Psoas muscle (tissue), 8 donors: ENCODE measurements at regions of chr1 and their contacts with region 1.

Region 1: DNA sequence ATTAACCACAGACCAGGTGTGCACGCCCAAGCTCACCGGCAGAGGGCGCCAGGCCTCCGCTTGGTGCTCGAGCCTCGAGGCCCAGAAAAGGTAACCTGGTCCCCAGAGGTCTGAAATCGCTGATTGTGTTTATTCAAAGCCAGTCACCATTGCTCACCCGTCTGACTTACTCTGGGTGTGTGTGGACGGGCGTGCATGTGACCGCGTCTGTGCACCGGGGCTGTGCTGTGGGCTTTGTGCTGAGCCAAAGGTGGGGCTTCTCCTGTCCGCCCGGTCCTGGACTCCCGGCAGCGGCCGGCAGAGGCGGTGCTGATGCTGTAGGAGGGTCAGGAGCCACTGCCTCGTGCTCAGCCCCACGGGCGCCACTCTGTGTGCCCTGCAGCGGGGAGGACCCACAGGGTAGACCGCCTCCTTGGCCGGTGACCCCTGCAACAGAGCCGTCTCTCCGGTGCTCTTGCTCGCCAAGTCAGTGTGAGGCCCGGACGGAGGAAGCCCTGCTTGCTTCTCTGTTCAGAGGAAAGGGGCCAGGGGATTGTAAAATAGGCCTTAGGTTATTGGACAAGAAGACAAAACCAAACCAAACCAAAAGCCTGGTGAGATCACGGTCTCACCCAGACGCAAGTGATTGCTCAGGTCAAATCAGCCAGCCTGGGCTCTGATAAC is 32.0 kb upstream of the BTG2 start:
- DNase-seq: peak; percentile 86 to 94
- ATAC-seq: peak; percentile 58 to 66 (median 61)
- H3K4me3 ChIP-seq: peak overlapping the region; percentile 59
- H3K27ac ChIP-seq: peak overlapping the region; percentile 91
- H3K4me1 ChIP-seq: peaks cover 83% of the 10 kb centered on the region
- H3K27me3 ChIP-seq: no peaks in the 10 kb centered on the region
- CTCF ChIP-seq: peak; percentile 96

Region 2: DNA sequence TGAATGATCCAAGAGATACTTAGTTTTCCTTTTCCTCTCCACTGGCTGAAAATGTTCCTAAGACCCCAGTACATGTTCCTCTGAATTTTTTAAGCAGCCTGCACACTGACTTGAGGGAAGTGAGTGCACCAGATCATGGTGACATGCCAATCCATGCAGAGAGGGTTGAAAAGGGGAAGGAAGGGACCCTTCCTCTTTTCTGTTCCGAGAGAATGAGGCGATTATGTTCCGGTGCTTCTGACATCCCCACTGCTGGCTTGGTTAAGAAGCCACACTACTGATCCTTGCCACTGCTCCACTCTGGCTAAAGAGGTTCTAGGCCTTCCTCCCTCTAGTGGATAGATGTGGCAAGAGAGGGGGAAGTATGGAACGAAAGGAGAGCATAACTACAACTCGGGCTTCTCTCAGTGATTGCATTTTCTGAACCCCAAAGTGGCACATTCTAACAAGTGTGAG is 304.5 kb before region 1 on chr1:
- intact Hi-C with region 1: loop called in 1 of 2 experiments (anchors 5 kb)
- DNase-seq: peak in 1 of 2 donors; percentile 26
- ATAC-seq: peak in 2 of 4 donors; percentile 20 to 23
- H3K4me3 ChIP-seq: no peak overlapping the region
- H3K27ac ChIP-seq: peak overlapping the region; percentile 99
- H3K4me1 ChIP-seq: peaks cover 10% of the 10 kb centered on the region
- H3K27me3 ChIP-seq: no peaks in the 10 kb centered on the region
- CTCF ChIP-seq: peak; percentile 58

Region 3: DNA sequence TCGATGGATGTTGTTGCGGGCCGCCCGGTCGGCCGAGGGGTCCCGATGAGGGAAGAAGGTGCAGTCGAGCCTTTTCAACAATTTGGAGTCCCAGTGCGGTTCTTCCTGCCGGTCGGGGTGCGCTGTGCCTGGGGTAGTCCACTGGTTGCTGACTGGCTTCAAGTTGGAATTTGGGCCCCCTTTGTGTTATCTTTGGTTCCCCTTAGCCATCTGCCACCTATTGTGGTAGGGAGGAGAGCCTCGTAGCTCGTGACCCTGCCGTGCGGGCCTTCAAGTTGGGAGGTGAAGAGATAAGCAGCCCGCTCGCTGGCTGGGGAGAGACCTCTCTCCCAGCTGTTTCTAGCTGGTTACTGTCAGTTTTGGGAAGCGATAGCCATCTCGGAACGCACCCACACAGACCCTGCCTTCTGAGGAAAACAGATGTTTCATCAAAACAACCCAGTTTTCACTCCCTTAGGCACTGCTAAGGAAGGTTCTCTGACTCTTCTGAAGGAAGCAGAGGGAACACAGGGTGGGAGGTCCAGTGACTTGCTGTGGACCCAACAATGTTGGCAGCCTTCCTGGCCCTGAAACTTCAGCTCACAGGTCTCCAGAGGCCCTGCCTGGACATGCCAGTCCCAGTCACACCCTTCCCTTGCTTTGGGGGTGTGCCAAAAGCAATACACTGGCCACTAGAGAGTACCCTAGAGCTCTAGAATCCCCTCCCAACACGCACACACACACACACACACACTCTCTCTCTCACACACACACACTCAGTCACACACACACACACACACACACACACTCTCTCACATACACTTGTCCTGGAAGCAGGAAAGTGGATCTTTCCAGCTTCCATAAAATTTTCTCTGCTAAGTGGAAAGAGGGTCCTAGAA is 33.0 kb after region 1 on chr1:
- intact Hi-C with region 1: loop called in 1 of 2 experiments (anchors 1 kb)
- DNase-seq: peak; percentile 85 to 94
- ATAC-seq: peak; percentile 49 to 68 (median 64)
- H3K4me3 ChIP-seq: peak overlapping the region; percentile 93
- H3K27ac ChIP-seq: peak overlapping the region; percentile 98
- H3K4me1 ChIP-seq: peaks cover 27% of the 10 kb centered on the region
- H3K27me3 ChIP-seq: no peaks in the 10 kb centered on the region
- CTCF ChIP-seq: no peak

Region 4: GRCh38 chr1:203326830-203327683 is 53.7 kb after region 1 on chr1:
- intact Hi-C with region 1: loop called in 1 of 2 experiments (anchors 1 kb)
- DNase-seq: peak; percentile 95 to 96
- ATAC-seq: peak; percentile 93 to 96 (median 95)
- H3K4me3 ChIP-seq: peak overlapping the region; percentile 74
- H3K27ac ChIP-seq: peak overlapping the region; percentile 91
- H3K4me1 ChIP-seq: peaks cover 29% of the 10 kb centered on the region
- H3K27me3 ChIP-seq: no peaks in the 10 kb centered on the region
- CTCF ChIP-seq: no peak

Region 5: GRCh38 chr1:203340112-203340804 is 66.9 kb after region 1 on chr1:
- intact Hi-C with region 1: loop called (anchors 2 kb)
- DNase-seq: peak; percentile 57 to 74
- ATAC-seq: peak; percentile 69 to 79 (median 78)
- H3K4me3 ChIP-seq: no peak overlapping the region
- H3K27ac ChIP-seq: no peak overlapping the region
- H3K4me1 ChIP-seq: peaks cover 11% of the 10 kb centered on the region
- H3K27me3 ChIP-seq: no peaks in the 10 kb centered on the region
- CTCF ChIP-seq: peak; percentile 90

Region 6: DNA sequence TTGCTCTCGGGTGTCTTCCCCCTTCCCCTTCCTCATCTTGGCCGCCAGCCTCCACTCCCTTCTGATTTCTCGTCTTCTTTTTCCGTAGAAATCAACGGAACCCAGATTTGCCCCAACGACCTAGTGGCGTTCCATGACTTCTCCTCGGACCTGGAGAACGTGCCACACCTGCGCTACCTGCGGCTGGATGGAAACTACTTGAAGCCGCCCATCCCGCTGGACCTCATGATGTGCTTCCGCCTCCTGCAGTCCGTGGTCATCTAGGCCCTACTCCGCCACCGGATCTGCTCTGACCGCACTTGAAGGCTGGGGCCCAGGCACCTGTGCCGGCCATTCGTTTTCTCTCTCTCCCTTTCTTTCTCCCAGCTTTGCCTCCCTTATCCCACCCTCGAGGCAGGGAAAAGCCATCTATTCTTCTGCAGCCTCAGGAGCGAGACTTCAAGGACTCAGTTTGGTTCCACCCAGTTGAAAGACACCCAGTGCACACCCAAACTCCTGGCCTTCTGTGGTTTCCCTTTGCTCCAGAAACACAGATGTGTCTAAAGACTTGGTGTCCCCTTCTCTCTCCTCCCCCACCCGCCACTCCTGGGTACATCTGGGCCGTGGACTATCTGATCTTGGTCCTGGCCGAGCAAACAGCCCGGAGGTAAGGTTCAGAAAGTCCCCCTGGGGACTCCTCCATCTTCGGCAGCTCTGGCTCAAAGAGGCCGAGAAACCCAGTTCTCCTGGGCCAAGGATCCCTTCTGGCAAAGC is 213.5 kb after region 1 on chr1:
- intact Hi-C with region 1: loop called (anchors 2 to 5 kb)
- DNase-seq: no peak
- ATAC-seq: peak in 2 of 4 donors; percentile 12 to 26
- H3K4me3 ChIP-seq: peak overlapping the region; percentile 64
- H3K27ac ChIP-seq: peak overlapping the region; percentile 56
- H3K4me1 ChIP-seq: peaks cover 11% of the 10 kb centered on the region
- H3K27me3 ChIP-seq: no peaks in the 10 kb centered on the region
- CTCF ChIP-seq: no peak